Activated CD4-positive, alpha-beta memory T cell treated with anti-CD3 and anti-CD28 coated beads, Interleukin-2, amount 10 ng/mL, durations not matched to agents 7 days and 5 days (primary cell): ENCODE measurements at regions of chr3 and their contacts with region 1.

Region 1: GRCh38 chr3:63951492-63952247 is 39.5 kb upstream of the SCAANT1 start:
- DNase-seq: no peak
- H3K4me3 Mint-ChIP-seq: peak overlapping the region; percentile 12
- H3K27ac Mint-ChIP-seq: peak overlapping the region; percentile 52
- H3K4me1 Mint-ChIP-seq: peaks cover 44% of the 10 kb centered on the region
- H3K27me3 Mint-ChIP-seq: no peaks in the 10 kb centered on the region

Region 2: GRCh38 chr3:63876260-63876659 is 75.4 kb before region 1 on chr3:
- CTCF ChIA-PET with region 1: no interaction called
- POLR2A ChIA-PET with region 1: no interaction called
- DNase-seq: no peak
- H3K4me3 Mint-ChIP-seq: no peak overlapping the region
- H3K27ac Mint-ChIP-seq: no peak overlapping the region
- H3K4me1 Mint-ChIP-seq: peaks cover 43% of the 10 kb centered on the region
- H3K27me3 Mint-ChIP-seq: no peaks in the 10 kb centered on the region

Region 3: GRCh38 chr3:63937661-63938651 is 13.7 kb before region 1 on chr3:
- CTCF ChIA-PET with region 1: interaction called, 5 read pairs
- POLR2A ChIA-PET with region 1: interaction called, 12 read pairs
- DNase-seq: peak; percentile 19
- H3K4me3 Mint-ChIP-seq: no peak overlapping the region
- H3K27ac Mint-ChIP-seq: no peak overlapping the region
- H3K4me1 Mint-ChIP-seq: peaks cover 70% of the 10 kb centered on the region
- H3K27me3 Mint-ChIP-seq: no peaks in the 10 kb centered on the region

Region 4: GRCh38 chr3:63961891-63962290 is 10.2 kb after region 1 on chr3:
- CTCF ChIA-PET with region 1: interaction called, 20 read pairs
- POLR2A ChIA-PET with region 1: interaction called, 15 read pairs
- DNase-seq: no peak
- H3K4me3 Mint-ChIP-seq: no peak overlapping the region
- H3K27ac Mint-ChIP-seq: no peak overlapping the region
- H3K4me1 Mint-ChIP-seq: peaks cover 58% of the 10 kb centered on the region
- H3K27me3 Mint-ChIP-seq: no peaks in the 10 kb centered on the region

Region 5: DNA sequence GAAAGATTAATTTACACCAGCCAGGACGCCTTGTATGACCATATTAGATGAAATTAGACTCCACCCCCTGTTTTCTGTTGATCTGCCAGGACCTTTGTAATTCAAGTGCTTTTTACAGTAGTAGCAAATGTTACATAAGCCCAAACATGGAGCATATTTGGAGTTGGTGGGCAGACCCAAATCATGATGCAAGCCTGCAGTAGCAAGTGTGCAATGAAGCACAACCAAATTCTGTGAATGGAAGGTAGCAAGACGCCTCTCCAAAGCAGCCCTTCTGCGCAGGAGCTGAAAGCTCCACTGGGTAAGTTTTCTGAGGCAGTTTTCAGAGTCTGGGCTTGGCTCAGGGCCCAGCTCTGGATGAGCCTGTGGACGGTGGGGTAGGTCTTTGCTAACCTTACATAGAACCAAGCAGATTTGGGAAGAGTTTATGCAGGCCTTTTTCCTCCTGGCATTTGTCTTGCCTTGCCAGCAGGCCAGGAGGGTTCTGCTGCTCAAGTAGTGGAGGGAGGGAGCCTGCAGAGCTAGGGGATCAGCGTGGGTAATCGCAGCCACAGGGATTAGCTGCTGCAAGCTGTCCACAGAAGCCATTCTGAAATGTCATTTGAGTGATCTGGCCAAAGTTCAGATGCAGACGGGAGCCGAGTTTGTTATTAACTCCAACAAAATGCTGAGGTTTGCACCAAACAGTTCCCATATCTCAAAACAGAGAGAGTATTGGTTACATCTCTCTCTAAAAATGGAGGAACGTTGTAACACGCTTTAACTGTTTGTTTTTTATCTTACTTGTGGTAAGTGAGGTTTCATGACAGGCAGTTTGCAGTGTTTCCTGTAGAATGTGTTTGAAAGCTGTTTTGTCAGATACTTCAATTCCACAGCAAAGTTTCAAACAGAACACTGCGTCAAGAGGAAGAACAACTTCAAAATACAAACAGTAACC is 16.3 kb after region 1 on chr3:
- CTCF ChIA-PET with region 1: interaction called, 20 read pairs
- POLR2A ChIA-PET with region 1: interaction called, 15 read pairs
- DNase-seq: peak; percentile 49
- H3K4me3 Mint-ChIP-seq: peak overlapping the region; percentile 80
- H3K27ac Mint-ChIP-seq: peak overlapping the region; percentile 98
- H3K4me1 Mint-ChIP-seq: peaks cover 87% of the 10 kb centered on the region
- H3K27me3 Mint-ChIP-seq: no peaks in the 10 kb centered on the region